Activated CD8-positive, alpha-beta T cell treated with anti-CD3 and anti-CD28 coated beads, Interleukin-2, amount 10 ng/mL, durations not matched to agents 7 days and 5 days (primary cell): ENCODE measurements at regions of chr13 and their contacts with region 1.

Region 1: GRCh38 chr13:102596147-102597028 is at the start of gene TPP2:
- DNase-seq: peak; percentile 98
- ATAC-seq: peak; percentile 92
- H3K4me3 Mint-ChIP-seq: peak within 1 kb of the TSS; percentile 99
- H3K27ac Mint-ChIP-seq: peak within 1 kb of the TSS; percentile 100
- H3K4me1 Mint-ChIP-seq: peaks cover 60% of the 10 kb centered on the region
- H3K27me3 Mint-ChIP-seq: no peaks in the 10 kb centered on the region
- total RNA-seq, gene TPP2: 77.8 to 85.4 TPM

Region 2: DNA sequence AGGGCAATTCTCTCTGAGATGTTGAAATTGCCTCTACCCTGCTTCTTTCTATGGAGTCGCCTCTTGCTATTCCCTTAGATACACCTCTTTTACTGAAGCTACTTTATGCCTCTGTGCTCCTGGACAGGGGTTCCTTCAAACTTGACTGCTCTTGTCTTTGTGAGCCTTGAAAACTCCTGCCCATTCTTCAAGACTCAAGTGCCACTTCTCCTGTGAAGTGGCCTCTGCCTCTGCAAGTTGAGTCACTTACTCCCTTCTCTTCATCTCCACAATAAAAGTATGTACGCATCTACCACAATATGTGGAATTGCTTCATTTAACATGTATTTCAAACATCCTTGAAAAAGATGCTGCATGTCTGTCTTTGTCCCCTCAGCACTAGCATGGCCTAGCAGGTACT is 65.6 kb before region 1 on chr13:
- CTCF ChIA-PET with region 1: no interaction called
- POLR2A ChIA-PET with region 1: no interaction called
- DNase-seq: no peak
- ATAC-seq: no peak
- H3K4me3 Mint-ChIP-seq: no peak overlapping the region
- H3K27ac Mint-ChIP-seq: no peak overlapping the region
- H3K4me1 Mint-ChIP-seq: no peaks in the 10 kb centered on the region
- H3K27me3 Mint-ChIP-seq: no peaks in the 10 kb centered on the region

Region 3: GRCh38 chr13:102608974-102609373 is 12.6 kb after region 1 on chr13:
- CTCF ChIA-PET with region 1: interaction called, 13 read pairs
- POLR2A ChIA-PET with region 1: interaction called, 37 read pairs
- DNase-seq: no peak
- ATAC-seq: no peak
- H3K4me3 Mint-ChIP-seq: no peak overlapping the region
- H3K27ac Mint-ChIP-seq: peak overlapping the region; percentile 86
- H3K4me1 Mint-ChIP-seq: peaks cover 62% of the 10 kb centered on the region
- H3K27me3 Mint-ChIP-seq: no peaks in the 10 kb centered on the region

Region 4: GRCh38 chr13:102642475-102642874 is 46.1 kb after region 1 on chr13:
- CTCF ChIA-PET with region 1: interaction called, 18 read pairs
- POLR2A ChIA-PET with region 1: interaction called, 3 read pairs
- DNase-seq: no peak
- ATAC-seq: no peak
- H3K4me3 Mint-ChIP-seq: no peak overlapping the region
- H3K27ac Mint-ChIP-seq: no peak overlapping the region
- H3K4me1 Mint-ChIP-seq: no peaks in the 10 kb centered on the region
- H3K27me3 Mint-ChIP-seq: no peaks in the 10 kb centered on the region

Region 5: GRCh38 chr13:102800145-102801041 is 204.0 kb after region 1 on chr13:
- CTCF ChIA-PET with region 1: interaction called, 16 read pairs
- POLR2A ChIA-PET with region 1: interaction called, 8 read pairs
- DNase-seq: peak; percentile 90
- ATAC-seq: peak; percentile 79
- H3K4me3 Mint-ChIP-seq: peak overlapping the region; percentile 87
- H3K27ac Mint-ChIP-seq: peak overlapping the region; percentile 87
- H3K4me1 Mint-ChIP-seq: peaks cover 40% of the 10 kb centered on the region
- H3K27me3 Mint-ChIP-seq: no peaks in the 10 kb centered on the region